ENCODE measurements at regions of chr16 and their contacts with region 1.

Region 1: DNA sequence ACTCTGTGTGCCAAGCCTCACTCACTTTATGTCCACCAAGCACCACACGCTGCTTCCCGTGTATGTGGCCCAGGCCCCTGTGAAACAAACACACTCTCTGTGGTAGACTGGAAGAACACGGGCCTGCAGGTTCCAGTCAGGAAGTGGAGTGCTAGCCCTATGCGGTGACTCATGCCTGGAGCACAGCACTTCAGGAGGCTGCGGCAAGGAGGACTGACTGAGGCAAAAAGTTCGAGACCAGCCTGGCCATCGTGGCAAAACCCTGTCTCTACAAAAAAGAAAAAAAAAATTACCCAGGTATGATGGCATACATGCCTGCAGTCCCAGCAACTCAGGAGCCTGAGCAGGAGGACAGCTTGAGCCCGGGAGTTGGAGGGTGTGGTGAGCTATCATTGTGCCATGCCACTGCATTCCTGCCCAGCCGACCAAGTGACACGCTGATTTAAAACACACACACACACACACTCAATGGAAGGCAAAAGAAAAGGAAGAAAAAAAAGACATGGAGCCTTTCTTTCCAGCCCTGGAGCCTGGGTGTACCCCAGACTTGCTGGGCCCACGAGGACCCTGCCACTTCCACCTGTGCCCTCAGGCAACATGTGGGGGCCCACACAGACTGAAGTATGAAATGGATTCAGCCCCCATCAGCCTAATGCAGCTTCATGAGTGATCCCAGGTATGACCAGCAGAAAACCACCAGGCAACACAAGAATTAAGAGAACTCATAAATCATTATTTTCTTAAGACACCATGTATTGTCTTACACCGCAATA is 126.6 kb downstream of the ANKRD11 start:
- DNase-seq: no peak
- ATAC-seq: no peak
- H3K4me3 ChIP-seq: no peak overlapping the region
- H3K27ac ChIP-seq: peak overlapping the region; percentile 49
- H3K4me1 ChIP-seq: peaks cover 81% of the 10 kb centered on the region
- H3K27me3 ChIP-seq: no peaks in the 10 kb centered on the region
- CTCF ChIP-seq: no peak
- EP300 ChIP-seq: no peak
- POLR2A ChIP-seq: no peak
- RAD21 ChIP-seq: no peak

Region 2: DNA sequence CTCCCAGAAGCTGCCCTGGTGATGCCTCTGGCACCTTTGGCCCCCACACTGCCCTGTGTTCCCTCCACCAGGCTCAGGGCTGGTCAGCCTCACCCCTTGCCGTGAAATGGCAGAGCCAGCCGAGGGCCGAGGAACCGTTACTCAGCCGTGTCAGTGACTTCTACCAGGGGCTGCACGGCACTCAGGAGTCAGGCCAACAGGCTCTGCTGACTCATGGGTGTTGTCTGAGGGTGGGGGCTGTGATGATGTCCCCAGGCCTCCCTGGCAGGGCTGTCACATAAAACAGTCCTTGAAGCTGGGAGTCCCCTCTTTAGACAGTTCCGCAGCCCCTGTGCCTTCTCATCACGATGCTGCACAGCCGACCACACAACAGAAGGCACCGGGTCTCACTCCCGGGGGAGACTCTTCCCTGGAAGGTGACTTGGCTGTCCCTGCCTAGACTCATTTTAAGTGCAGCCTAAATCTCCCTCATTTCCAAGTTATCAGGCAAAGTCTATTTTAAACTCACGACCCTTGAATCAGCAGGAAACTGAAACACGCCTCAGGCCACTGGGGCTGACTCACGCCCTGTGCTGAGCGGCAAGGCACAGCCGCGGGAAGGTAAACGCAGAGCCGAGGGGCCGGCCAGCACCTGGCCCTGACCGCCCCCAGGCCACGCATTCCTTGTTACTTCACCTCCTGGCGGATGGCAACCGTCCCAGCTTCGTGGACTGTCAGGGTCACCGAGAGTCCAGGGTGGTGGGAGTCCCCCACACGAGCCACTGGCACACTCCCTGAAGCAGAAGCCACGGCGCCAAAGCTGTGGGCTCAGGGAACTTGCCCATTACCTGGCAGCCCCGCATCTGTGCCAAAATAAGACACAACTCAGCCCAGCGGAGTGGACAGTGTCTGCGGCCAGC is 43.7 kb before region 1 on chr16:
- CTCF ChIA-PET with region 1: no interaction called
- POLR2A ChIA-PET with region 1: no interaction called
- RAD21 ChIA-PET with region 1: interaction called, 10 read pairs
- SMC1A ChIA-PET with region 1: interaction called, 11 read pairs
- in situ Hi-C with region 1: no loop called
- intact Hi-C with region 1: loop called (anchors 5 kb)
- DNase-seq: peak; percentile 17
- ATAC-seq: peak; percentile 69
- H3K4me3 ChIP-seq: peak overlapping the region; percentile 35; the same call in 1 of the 2 replicates
- H3K27ac ChIP-seq: peak overlapping the region; percentile 76
- H3K4me1 ChIP-seq: peaks cover 73% of the 10 kb centered on the region
- H3K27me3 ChIP-seq: no peaks in the 10 kb centered on the region
- CTCF ChIP-seq: no peak
- EP300 ChIP-seq: no peak
- POLR2A ChIP-seq: peak; percentile 23; the same call in 1 of the 2 replicates
- RAD21 ChIP-seq: no peak

Region 3: GRCh38 chr16:89422905-89423630 is 59.3 kb after region 1 on chr16:
- CTCF ChIA-PET with region 1: no interaction called
- POLR2A ChIA-PET with region 1: interaction called, 5 read pairs
- RAD21 ChIA-PET with region 1: interaction called, 5 read pairs
- SMC1A ChIA-PET with region 1: interaction called, 4 read pairs
- in situ Hi-C with region 1: no loop called
- intact Hi-C with region 1: loop called (anchors 2 kb)
- DNase-seq: peak; percentile 72
- ATAC-seq: peak; percentile 92
- H3K4me3 ChIP-seq: peak overlapping the region; percentile 55; the same call in 1 of the 2 replicates
- H3K27ac ChIP-seq: peak overlapping the region; percentile 69
- H3K4me1 ChIP-seq: peaks cover 66% of the 10 kb centered on the region
- H3K27me3 ChIP-seq: no peaks in the 10 kb centered on the region
- CTCF ChIP-seq: no peak
- EP300 ChIP-seq: peak in 1 of 2 experiments; percentile 47; a peak in 2 of 4 replicates
- POLR2A ChIP-seq: peak; percentile 55
- RAD21 ChIP-seq: no peak

Region 4: GRCh38 chr16:89484923-89485679 is 121.3 kb after region 1 on chr16:
- CTCF ChIA-PET with region 1: no interaction called
- POLR2A ChIA-PET with region 1: interaction called, 6 read pairs
- RAD21 ChIA-PET with region 1: interaction called, 6 read pairs
- SMC1A ChIA-PET with region 1: interaction called, 10 read pairs
- in situ Hi-C with region 1: no loop called
- intact Hi-C with region 1: loop called (anchors 5 kb)
- DNase-seq: peak; percentile 41
- ATAC-seq: peak; percentile 57
- H3K4me3 ChIP-seq: peak overlapping the region; percentile 69
- H3K27ac ChIP-seq: peak overlapping the region; percentile 92
- H3K4me1 ChIP-seq: peaks cover 60% of the 10 kb centered on the region
- H3K27me3 ChIP-seq: no peaks in the 10 kb centered on the region
- CTCF ChIP-seq: no peak
- EP300 ChIP-seq: no peak; a peak in 1 of 4 replicates
- POLR2A ChIP-seq: peak; percentile 44; the same call in 1 of the 2 replicates
- RAD21 ChIP-seq: no peak